ENCODE measurements at regions of chr10 and their contacts with region 1.

Region 1: DNA sequence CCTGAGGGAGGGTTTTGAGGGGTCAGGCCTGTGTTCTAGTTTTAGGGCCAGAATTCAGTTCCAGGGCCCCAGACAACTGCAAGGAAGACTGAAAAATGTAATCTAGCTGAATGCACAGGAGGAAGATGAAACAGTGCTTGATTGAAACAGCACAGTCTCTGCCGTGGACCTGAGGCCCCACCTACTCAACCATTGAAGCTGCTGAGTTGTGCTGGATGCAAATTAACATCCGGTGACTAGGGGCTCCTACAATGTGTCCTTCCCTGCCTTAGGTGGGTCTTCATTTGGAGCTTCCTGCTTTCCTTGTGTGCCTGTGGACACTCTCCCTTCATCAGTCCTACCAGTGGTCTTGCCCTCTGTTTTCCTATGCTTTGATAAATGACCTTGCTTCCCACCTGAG is 5.7 kb downstream of the GLRX3 start:
- DNase-seq: no peak
- H3K4me3 ChIP-seq: no peak overlapping the region
- CTCF ChIP-seq: no peak

Region 2: DNA sequence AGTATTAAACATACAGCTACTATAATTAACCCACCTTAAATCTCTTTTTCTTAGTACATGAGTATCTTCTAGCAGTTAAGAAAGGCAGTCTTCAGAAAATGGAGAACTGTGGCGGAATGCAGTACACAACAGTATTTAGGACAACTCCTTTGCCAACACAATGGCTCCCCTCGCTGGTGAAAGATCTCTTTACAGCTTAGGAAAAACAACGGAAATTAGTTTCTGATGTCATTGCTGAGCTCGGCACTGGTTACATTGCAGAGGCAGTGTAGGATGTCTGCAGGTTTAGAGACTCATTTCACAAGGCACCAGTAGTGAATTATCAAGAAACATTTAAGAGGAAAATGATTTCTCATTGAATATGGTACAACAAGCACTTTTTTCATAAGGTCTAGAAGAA is 37.8 kb after region 1 on chr10:
- in situ Hi-C with region 1: loop called (anchors 5 kb)
- DNase-seq: peak; percentile 77
- H3K4me3 ChIP-seq: no peak overlapping the region
- CTCF ChIP-seq: peak; percentile 71

Region 3: GRCh38 chr10:130243015-130243414 is 101.1 kb after region 1 on chr10:
- in situ Hi-C with region 1: no loop called
- DNase-seq: no peak
- H3K4me3 ChIP-seq: no peak overlapping the region
- CTCF ChIP-seq: no peak